ENCODE measurements at regions of chr12 and their contacts with region 1.

Region 1: DNA sequence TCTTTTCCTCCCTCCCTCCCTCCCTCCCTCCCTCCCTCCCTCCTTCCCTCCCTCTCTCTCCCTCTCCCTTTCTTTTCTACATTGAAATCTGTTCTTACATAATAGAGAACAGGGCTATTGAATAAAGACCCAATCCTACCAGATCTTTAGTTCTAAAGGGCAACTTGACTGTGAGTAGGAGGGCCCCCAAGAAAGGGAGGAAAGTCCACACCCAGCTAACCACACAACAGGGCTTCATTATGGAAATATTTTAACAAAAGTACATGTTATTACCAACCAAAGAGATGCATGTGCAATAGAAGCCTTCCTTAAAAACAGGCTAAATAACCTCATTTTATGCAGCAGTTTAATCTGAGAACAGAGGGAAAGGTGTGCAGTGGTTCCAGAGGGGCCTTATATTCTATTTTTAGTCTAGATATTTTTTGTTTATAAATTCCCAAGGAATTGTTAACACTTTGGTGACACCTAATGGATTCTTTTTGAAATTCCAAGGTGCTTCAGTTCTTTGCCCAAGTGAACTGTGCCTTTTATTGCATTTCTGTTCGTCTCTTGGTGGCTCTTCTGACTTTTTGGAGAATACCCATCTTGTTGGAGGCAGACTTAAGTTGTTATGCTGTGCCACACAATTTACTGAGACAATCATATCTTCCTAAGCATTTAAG is 63.0 kb downstream of the GNS start:
- DNase-seq: no peak
- ATAC-seq: peak; percentile 8
- H3K4me3 ChIP-seq: no peak overlapping the region
- H3K4me1 ChIP-seq: peaks cover 4% of the 10 kb centered on the region
- CTCF ChIP-seq: no peak

Region 2: GRCh38 chr12:64544371-64545080 is 151.7 kb before region 1 on chr12:
- intact Hi-C with region 1: loop called (anchors 2 to 5 kb)
- DNase-seq: no peak
- ATAC-seq: no peak
- H3K4me3 ChIP-seq: no peak overlapping the region
- H3K4me1 ChIP-seq: no peaks in the 10 kb centered on the region
- CTCF ChIP-seq: no peak

Region 3: GRCh38 chr12:64840949-64841717 is 144.9 kb after region 1 on chr12:
- intact Hi-C with region 1: no loop called
- DNase-seq: peak; percentile 35 to 55 (median 51)
- ATAC-seq: peak; percentile 90
- H3K4me3 ChIP-seq: no peak overlapping the region
- H3K4me1 ChIP-seq: peaks cover 7% of the 10 kb centered on the region
- CTCF ChIP-seq: no peak